Esophagus squamous epithelium (tissue), 5 donors: ENCODE measurements at regions of chr3 and their contacts with region 1.

Region 1: GRCh38 chr3:119891944-119892721 is 110.2 kb downstream of the NR1I2 start:
- DNase-seq: no peak
- H3K4me3 ChIP-seq: no peak overlapping the region
- H3K27ac ChIP-seq: no peak overlapping the region
- H3K4me1 ChIP-seq: peaks cover 0 to 6% (median 4%) of the 10 kb centered on the region in 3 donors
- H3K27me3 ChIP-seq: no peaks in the 10 kb centered on the region
- CTCF ChIP-seq: peak in 5 of 6 experiments; percentile 45 to 79 (median 66)
- POLR2A ChIP-seq: no peak

Region 2: GRCh38 chr3:119990888-119991287 is 98.8 kb after region 1 on chr3:
- intact Hi-C with region 1: no loop called
- DNase-seq: no peak
- H3K4me3 ChIP-seq: no peak overlapping the region
- H3K27ac ChIP-seq: no peak overlapping the region
- H3K4me1 ChIP-seq: peaks cover 0 to 11% (median 4%) of the 10 kb centered on the region in 3 donors
- H3K27me3 ChIP-seq: no peaks in the 10 kb centered on the region
- CTCF ChIP-seq: no peak
- POLR2A ChIP-seq: no peak

Region 3: GRCh38 chr3:120182724-120183524 is 290.8 kb after region 1 on chr3:
- intact Hi-C with region 1: loop called (anchors 5 kb)
- DNase-seq: no peak
- H3K4me3 ChIP-seq: no peak overlapping the region
- H3K27ac ChIP-seq: no peak overlapping the region
- H3K4me1 ChIP-seq: peaks cover 0 to 8% (median 0%) of the 10 kb centered on the region in 3 donors
- H3K27me3 ChIP-seq: no peaks in the 10 kb centered on the region
- CTCF ChIP-seq: peak; percentile 17 to 58 (median 44)
- POLR2A ChIP-seq: no peak